Naive thymus-derived CD4-positive, alpha-beta T cell (primary cell): ENCODE measurements at regions of chr20 and their contacts with region 1.

Region 1: GRCh38 chr20:41339507-41340326 is 904 bp upstream of the LPIN3 start:
- DNase-seq: peak; percentile 72 to 92 (median 83)
- ATAC-seq: peak; percentile 97
- H3K4me3 ChIP-seq: peak overlapping the region; percentile 28
- H3K4me3 Mint-ChIP-seq: peak overlapping the region; percentile 72 to 85 (median 82)
- H3K27ac ChIP-seq: no peak overlapping the region
- H3K27ac Mint-ChIP-seq: peak overlapping the region in 5 of 9 donors; percentile 47 to 86 (median 67)
- H3K4me1 ChIP-seq: peaks cover 0 to 3% of the 10 kb centered on the region in 2 donors
- H3K4me1 Mint-ChIP-seq: peaks cover 8 to 15% (median 9%) of the 10 kb centered on the region in 7 donors
- H3K27me3 ChIP-seq: no peaks in the 10 kb centered on the region
- H3K27me3 Mint-ChIP-seq: peaks cover 0 to 12% (median 3%) of the 10 kb centered on the region in 5 donors

Region 2: DNA sequence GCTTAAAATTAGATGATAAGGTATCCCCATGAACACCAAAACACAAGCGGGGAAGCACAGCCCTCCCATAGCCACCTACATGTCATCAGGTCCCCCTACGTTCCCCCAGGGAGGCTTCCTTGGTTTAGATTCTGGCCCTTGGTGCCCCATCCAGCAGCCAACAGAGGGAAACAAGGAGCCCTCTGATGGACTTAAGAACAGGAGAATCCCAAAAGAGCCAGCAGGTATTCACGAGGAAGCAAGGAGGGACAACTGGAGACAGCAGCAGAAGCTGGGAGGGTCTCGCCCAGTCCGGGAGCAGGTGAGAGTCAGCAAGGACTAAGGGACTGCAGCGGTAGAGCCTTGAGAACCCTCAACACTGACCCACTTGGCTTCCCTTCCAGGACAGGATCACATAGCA is 369.5 kb before region 1 on chr20:
- CTCF ChIA-PET with region 1: no interaction called
- POLR2A ChIA-PET with region 1: no interaction called
- intact Hi-C with region 1: loop called (anchors 1 kb)
- DNase-seq: no peak
- ATAC-seq: no peak
- H3K4me3 ChIP-seq: no peak overlapping the region
- H3K4me3 Mint-ChIP-seq: no peak overlapping the region
- H3K27ac ChIP-seq: no peak overlapping the region
- H3K27ac Mint-ChIP-seq: no peak overlapping the region
- H3K4me1 ChIP-seq: no peaks in the 10 kb centered on the region
- H3K4me1 Mint-ChIP-seq: peaks cover 5 to 12% (median 9%) of the 10 kb centered on the region in 7 donors
- H3K27me3 ChIP-seq: no peaks in the 10 kb centered on the region
- H3K27me3 Mint-ChIP-seq: peaks cover 0 to 49% (median 8%) of the 10 kb centered on the region in 5 donors

Region 3: DNA sequence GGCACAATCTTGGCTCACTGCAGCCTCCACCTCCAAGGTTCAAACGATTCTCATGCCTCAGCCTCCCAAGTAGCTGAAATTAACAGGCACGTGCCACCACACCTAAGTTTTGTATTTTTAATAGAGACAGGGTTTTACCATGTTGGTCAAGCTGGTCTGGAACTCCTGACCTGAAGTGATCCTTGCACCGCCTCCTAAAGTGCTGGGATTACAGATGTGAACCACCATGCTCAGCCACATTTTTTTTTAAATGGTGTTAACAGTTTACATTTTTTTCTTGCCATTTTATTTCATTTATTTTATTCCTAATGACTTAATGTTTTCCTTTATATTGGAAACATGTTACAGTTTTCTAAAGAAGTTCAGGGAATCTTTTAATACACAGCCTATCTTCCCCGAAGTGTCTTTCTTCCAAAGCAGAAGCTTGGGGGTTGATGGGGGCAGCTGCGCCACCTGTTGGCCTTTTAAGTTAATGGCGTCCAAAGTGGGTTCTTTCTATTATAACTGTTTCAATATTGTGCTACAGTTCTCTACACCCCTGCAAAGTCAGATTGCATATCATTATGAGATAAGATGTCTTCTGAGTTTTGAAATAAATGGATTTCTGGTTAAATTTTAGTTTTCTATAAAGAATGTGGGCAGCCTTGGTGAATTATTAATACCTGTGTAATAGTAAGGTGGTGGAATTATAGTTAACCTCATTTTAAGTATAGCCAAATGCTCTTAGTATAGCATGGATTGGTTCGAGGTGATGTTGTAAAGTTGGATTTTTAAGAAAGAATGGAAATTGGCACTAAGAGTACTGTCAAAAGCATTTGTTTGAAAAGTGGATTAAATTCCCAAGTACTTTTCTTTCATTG is 244.4 kb before region 1 on chr20:
- CTCF ChIA-PET with region 1: interaction called, 8 read pairs
- POLR2A ChIA-PET with region 1: no interaction called
- intact Hi-C with region 1: loop called (anchors 1 kb)
- DNase-seq: peak; percentile 27 to 63 (median 54)
- ATAC-seq: peak; percentile 85
- H3K4me3 ChIP-seq: no peak overlapping the region
- H3K4me3 Mint-ChIP-seq: no peak overlapping the region
- H3K27ac ChIP-seq: no peak overlapping the region
- H3K27ac Mint-ChIP-seq: peak overlapping the region in 4 of 9 donors; percentile 31 to 77 (median 52)
- H3K4me1 ChIP-seq: no peaks in the 10 kb centered on the region
- H3K4me1 Mint-ChIP-seq: peaks cover 0 to 11% (median 4%) of the 10 kb centered on the region in 7 donors
- H3K27me3 ChIP-seq: no peaks in the 10 kb centered on the region
- H3K27me3 Mint-ChIP-seq: no peaks in the 10 kb centered on the region

Region 4: GRCh38 chr20:41173161-41173721 is 166.5 kb before region 1 on chr20:
- CTCF ChIA-PET with region 1: interaction called, 12 read pairs
- POLR2A ChIA-PET with region 1: interaction called, 3 read pairs
- intact Hi-C with region 1: loop called (anchors 1 kb)
- DNase-seq: peak; percentile 34 to 72 (median 56)
- ATAC-seq: peak; percentile 88
- H3K4me3 ChIP-seq: no peak overlapping the region
- H3K4me3 Mint-ChIP-seq: no peak overlapping the region
- H3K27ac ChIP-seq: no peak overlapping the region
- H3K27ac Mint-ChIP-seq: peak overlapping the region in 7 of 9 donors; percentile 49 to 88 (median 79)
- H3K4me1 ChIP-seq: no peaks in the 10 kb centered on the region
- H3K4me1 Mint-ChIP-seq: peaks cover 8 to 36% (median 21%) of the 10 kb centered on the region in 7 donors
- H3K27me3 ChIP-seq: no peaks in the 10 kb centered on the region
- H3K27me3 Mint-ChIP-seq: no peaks in the 10 kb centered on the region

Region 5: GRCh38 chr20:41317536-41318270 is 22.0 kb before region 1 on chr20 and contains the start of gene ZHX3:
- CTCF ChIA-PET with region 1: no interaction called
- POLR2A ChIA-PET with region 1: no interaction called
- intact Hi-C with region 1: loop called (anchors 1 kb)
- DNase-seq: peak; percentile 90 to 97 (median 95)
- ATAC-seq: peak; percentile 99
- H3K4me3 ChIP-seq: peak within 1 kb of the TSS; percentile 47
- H3K4me3 Mint-ChIP-seq: peak within 1 kb of the TSS; percentile 74 to 92 (median 84)
- H3K27ac ChIP-seq: peak within 1 kb of the TSS; percentile 75
- H3K27ac Mint-ChIP-seq: peak within 1 kb of the TSS; percentile 48 to 87 (median 84)
- H3K4me1 ChIP-seq: no peaks in the 10 kb centered on the region
- H3K4me1 Mint-ChIP-seq: peaks cover 11 to 34% (median 28%) of the 10 kb centered on the region in 7 donors
- H3K27me3 ChIP-seq: no peaks in the 10 kb centered on the region
- H3K27me3 Mint-ChIP-seq: peaks cover 0 to 7% (median 0%) of the 10 kb centered on the region in 5 donors
- total RNA-seq, gene ZHX3: 7.9 to 12.8 (median 9.8) TPM